ENCODE measurements at regions of chr11 and their contacts with region 1.

Region 1: DNA sequence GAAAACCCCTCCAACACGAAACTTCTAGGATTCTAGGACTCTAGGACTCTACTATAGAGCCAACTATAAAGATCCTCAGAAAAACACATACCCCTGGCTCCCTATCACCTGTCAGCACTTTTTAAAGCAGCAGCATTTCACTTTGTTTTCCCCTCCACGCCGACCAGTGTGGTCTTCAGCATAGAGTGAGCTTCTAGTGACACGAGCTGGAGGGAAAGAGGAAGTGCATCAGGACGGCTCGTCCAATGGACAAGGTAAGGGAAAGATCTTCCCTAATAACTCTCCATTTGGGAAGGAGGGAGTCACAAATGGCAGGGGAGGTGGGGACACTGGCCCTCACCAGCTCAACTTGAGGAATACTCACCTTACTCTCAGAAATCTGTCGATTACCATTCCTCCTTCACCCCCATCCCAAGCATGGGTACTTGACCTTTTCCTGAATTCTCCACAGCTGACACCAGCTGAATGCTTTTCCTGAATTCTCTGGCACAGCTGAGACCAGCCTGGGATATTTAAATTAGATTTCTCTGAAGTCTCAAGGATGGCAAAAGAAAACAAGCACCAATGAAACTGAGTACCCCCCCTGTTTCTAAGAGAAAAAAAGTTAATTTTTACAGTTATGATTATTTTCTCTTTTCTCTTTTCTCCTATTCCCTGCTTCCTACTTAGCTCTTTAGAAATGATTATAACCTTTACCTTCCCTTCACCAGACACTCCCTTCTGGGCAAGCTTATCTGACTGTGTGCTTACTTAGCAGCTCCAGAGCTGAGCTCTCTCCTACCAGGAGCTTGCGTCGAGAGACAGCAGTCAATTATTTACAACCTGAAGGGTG is 33.3 kb upstream of the NNMT start:
- DNase-seq: peak; percentile 68

Region 2: DNA sequence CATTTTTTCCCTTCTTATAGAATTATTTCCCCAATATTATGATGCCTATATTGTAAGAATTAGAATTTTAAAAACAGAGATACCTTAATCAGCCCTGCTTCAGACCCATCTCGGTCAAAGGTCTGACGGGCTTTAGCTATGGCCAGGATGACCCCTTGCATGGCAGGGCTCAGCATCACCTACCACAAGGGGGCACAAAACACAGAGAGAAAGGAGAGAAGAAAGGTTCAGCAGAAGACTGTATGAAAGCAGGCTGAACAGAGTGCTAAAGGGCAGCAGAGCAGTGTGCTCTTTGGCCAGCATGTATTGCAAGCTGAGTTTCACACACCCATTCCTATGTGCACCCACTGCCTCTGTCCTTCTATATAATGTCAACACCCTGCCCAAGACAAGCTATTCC is 456.5 kb before region 1 on chr11:
- intact Hi-C with region 1: loop called (anchors 10 kb)
- DNase-seq: no peak

Region 3: DNA sequence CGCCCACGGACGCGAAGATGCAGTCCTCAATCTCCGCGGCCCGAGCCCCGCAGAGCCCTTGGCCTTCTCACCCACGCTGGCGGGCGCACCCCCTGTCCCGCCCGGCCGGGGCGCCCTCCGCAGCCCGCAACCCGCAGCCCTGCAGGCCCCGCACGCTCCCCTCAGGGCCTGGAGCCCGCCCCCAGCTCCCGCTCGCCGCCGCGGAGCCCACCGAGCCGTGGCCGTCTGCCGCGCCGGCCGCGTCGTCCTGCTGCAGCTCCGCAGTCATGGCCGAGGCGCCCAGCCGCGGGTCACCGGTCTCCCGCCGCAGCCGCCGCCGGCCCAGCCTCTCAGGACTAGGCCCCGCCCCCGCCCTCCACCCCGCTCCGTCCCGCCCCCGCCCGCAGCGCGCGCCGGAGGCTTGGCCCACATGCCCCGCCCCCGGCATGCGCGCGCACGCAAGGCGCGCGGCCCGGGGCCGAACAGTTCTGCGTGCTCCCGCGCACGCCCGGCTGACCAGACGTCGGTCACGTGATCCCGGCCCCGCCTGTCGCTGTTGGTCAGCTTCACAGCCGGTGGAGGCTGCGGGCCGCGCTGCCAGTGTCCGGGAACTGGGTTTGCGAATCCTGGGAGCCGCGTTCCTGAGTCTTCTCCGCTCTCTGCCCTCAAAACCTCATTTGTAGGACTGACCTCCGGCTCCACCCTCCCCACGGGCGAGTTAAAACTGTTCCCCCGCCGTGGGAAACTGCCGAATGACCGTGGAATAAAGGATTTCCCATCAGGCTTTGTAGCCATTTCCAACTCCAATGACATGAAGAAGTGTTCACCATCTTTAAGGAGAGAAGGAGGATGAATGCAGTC is 387.4 kb before region 1 on chr11 and contains the start of gene USP28:
- intact Hi-C with region 1: loop called (anchors 5 kb)
- DNase-seq: peak; percentile 99
- total RNA-seq, gene USP28: 139 TPM

Region 4: GRCh38 chr11:113896156-113896879 is 366.6 kb before region 1 on chr11:
- intact Hi-C with region 1: loop called (anchors 2 kb)
- DNase-seq: no peak

Region 5: DNA sequence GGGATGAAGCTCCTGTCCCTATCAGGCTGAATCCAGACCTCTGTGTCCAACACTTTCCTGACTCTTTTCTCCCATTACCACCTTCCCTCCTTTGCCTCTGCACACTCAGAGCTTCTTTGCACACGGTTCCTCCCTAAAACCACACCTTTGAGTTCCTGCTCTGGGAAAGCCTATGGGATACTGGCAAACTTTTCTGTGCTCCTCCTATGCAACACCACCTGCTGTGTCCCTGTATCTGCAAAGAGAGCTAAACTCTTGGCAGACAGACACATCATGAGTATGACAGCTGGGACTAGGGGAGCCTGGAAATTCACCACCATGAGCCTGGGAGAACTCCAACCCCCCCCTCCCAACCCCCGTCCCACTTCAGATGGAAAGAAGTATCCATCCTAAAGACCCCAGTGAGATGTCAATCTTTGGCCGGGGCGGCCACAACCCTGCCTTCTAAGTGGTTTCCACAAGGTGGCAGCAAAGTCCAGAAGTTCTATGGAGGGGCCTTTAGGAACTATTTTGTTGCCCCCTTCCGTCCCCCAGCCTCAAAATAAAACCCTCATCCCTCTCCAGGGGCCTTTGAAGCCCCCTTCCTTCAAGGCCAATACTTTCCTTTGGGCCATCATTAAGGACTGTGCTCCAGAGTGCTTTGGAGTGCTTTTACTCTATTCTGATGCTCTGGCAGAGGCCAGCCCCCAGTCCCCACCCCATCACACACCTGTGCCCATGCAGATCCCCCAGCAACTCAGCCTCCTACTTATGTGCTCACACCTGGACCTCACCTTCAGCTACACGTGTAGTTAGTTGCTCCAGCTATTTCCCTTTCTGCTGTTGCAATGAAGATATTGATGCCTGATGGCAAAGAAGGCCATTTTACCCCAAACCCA is 268.6 kb before region 1 on chr11:
- intact Hi-C with region 1: loop called (anchors 1 kb)
- DNase-seq: no peak

Region 6: GRCh38 chr11:114036156-114036811 is 226.6 kb before region 1 on chr11:
- intact Hi-C with region 1: loop called (anchors 1 kb)
- DNase-seq: peak; percentile 91

Region 7: GRCh38 chr11:114059278-114059983 is 203.5 kb before region 1 on chr11 and contains the start of gene ZBTB16:
- intact Hi-C with region 1: loop called (anchors 1 kb)
- DNase-seq: peak; percentile 93
- total RNA-seq, gene ZBTB16: 25.4 TPM

Measured in cardiac septum (tissue), 1 donor.